ENCODE measurements at regions of chr7 and their contacts with region 1.

Region 1: DNA sequence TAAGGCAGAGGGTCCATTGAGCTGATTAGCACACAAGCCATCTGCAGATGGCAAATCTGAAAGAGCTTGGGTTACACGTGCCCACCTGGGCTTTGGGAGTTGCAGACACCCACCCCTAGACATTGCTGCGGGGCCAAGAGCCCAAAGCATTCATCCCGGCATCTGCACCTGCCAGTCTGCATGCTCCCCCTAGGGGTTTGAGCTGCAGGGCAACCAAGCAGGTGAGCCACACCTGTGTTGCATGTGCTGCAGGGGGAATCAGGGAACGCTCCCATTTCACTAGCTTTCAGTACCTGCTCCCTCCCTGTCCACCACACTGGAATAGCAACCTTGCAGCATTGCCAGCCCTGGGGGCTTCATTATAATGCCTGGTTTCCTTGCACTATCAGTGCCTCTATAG is 21.1 kb downstream of the C7orf33 start:
- DNase-seq: peak; percentile 69
- ATAC-seq: peak; percentile 72
- H3K4me3 Mint-ChIP-seq: no peak overlapping the region
- H3K27ac Mint-ChIP-seq: no peak overlapping the region
- H3K4me1 Mint-ChIP-seq: peaks cover 42% of the 10 kb centered on the region
- H3K27me3 Mint-ChIP-seq: peaks cover 3% of the 10 kb centered on the region; the same call in 1 of the 2 replicates
- CTCF ChIP-seq: peak; percentile 22; the same call in 1 of the 2 replicates

Region 2: DNA sequence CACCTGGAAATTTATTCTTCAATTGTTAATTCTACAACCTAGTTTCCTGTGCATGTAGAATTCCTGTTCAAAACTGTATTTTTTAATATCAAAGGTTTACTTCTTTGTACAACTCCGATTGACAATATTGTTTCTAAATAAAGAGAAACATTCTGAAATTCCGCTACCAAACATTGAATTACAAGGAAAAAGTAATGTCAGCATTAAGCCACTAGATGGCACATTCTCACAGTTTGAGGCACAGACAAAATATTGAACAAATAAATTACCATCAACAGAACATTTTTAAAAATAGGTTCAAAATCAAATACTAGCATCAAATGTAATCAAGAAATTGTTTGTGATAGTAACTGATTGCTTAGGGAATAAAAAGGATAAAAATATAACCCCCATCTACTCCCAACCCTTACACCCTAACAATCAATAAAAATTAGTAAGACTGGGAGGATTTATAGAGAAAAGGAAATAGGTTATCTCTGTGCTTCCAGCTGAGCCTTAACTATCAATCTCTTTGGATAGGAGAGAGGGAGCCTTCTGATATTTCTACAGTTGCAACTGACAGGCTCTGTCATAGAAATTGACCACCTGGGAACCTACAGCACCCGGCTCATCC is 107.7 kb before region 1 on chr7:
- CTCF ChIA-PET with region 1: no interaction called
- POLR2A ChIA-PET with region 1: no interaction called
- DNase-seq: no peak
- ATAC-seq: no peak
- H3K4me3 Mint-ChIP-seq: no peak overlapping the region
- H3K27ac Mint-ChIP-seq: no peak overlapping the region
- H3K4me1 Mint-ChIP-seq: peaks cover 33% of the 10 kb centered on the region
- H3K27me3 Mint-ChIP-seq: no peaks in the 10 kb centered on the region
- CTCF ChIP-seq: peak; percentile 28

Region 3: DNA sequence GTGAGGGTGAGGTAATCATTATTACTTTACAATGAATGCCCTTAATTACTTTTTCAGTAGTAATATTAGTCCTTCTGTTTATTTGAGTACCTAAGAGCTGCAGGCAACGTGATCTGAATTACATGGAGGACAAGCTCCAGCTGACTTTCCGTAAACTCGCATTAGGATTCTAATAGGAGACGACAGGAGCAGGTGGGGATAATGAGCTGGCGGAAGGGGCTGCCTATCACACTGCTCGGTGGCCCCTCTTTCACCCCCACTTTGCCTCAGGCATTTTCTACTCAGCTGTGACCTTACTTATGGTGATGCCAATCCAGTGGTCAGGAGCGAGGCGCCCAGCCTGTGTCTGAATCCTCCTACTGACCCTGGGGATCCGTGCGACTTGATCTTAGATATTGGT is 21.2 kb before region 1 on chr7 and contains the start of gene C7orf33:
- CTCF ChIA-PET with region 1: interaction called, 10 read pairs
- POLR2A ChIA-PET with region 1: no interaction called
- DNase-seq: no peak
- ATAC-seq: peak; percentile 22; the same call in 1 of the 2 replicates
- H3K4me3 Mint-ChIP-seq: no peak within 1 kb of the TSS
- H3K27ac Mint-ChIP-seq: no peak within 1 kb of the TSS
- H3K4me1 Mint-ChIP-seq: peaks cover 52% of the 10 kb centered on the region
- H3K27me3 Mint-ChIP-seq: peaks cover 22% of the 10 kb centered on the region
- CTCF ChIP-seq: no peak
- total RNA-seq, gene C7orf33: not detected in 3 replicates

Region 4: DNA sequence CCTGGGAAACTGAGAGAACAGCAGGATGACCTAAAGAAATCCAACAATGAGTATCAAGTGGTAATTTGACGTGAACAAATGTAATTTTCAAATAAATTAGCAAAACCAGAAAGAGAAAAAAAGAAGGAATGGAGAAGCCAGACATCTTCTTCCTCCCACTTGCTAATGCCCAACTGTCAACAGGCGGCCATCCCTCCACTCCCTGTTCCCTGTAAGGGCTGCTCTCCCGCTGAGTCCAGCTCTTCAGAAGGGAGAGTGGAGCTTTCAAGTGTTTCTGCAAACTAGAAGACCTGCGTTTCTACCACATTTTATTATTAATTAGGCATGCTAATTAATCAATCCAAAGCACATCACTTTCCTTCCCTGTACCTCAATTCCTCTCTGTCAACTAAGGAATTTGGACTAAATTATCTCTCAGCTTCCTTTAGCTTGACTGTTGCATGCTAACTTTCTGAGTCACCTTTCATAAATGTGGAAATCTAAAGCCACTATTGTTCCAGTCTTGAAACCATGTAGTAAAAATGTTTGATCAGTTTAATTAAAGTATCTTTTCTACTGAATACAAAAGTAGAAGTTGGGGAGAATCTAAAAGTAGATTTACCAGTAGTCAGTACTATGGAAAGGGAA is 38.7 kb after region 1 on chr7:
- CTCF ChIA-PET with region 1: no interaction called
- POLR2A ChIA-PET with region 1: no interaction called
- DNase-seq: no peak
- ATAC-seq: no peak
- H3K4me3 Mint-ChIP-seq: no peak overlapping the region
- H3K27ac Mint-ChIP-seq: no peak overlapping the region
- H3K4me1 Mint-ChIP-seq: no peaks in the 10 kb centered on the region
- H3K27me3 Mint-ChIP-seq: no peaks in the 10 kb centered on the region; the same call in 1 of the 2 replicates
- CTCF ChIP-seq: no peak